ENCODE measurements at regions of chr6 and their contacts with region 1.

Region 1: GRCh38 chr6:134097114-134097707 is 44.8 kb upstream of the SLC2A12 start:
- DNase-seq: peak; percentile 67
- H3K4me3 Mint-ChIP-seq: no peak overlapping the region
- H3K27ac Mint-ChIP-seq: no peak overlapping the region
- H3K4me1 Mint-ChIP-seq: no peaks in the 10 kb centered on the region
- H3K27me3 Mint-ChIP-seq: peaks cover 11% of the 10 kb centered on the region

Region 2: DNA sequence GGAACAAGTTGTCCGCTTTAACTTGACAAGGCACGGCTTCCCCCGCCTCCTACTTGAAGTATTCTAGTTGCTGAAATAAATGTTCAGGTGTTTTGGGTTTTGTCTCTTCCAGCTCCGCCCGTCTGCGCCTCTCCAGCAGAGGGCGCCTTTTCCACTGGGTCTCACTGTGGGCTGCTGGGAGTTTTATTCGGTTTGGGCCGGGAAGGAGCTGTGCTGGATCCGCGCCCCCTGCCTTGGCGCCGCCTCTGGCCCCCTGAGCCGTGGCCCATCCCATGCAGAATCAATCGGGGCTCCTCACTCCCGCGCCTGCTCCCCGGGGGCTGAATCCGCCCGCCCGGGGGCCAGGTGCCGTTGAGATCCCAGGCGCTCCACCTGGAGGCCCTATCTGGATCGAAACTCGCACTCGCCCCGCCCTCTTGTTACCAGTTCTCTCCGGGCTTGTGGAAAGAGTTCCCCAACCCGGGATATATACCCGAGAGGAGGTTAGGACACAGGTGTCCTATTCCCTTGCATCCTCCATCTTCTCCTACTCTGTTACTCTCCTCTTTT is 259.3 kb before region 1 on chr6:
- CTCF ChIA-PET with region 1: interaction called, 22 read pairs
- POLR2A ChIA-PET with region 1: no interaction called
- intact Hi-C with region 1: loop called (anchors 2 kb)
- DNase-seq: peak; percentile 71
- H3K4me3 Mint-ChIP-seq: peak overlapping the region; percentile 60
- H3K27ac Mint-ChIP-seq: no peak overlapping the region
- H3K4me1 Mint-ChIP-seq: peaks cover 3% of the 10 kb centered on the region
- H3K27me3 Mint-ChIP-seq: peaks cover 15% of the 10 kb centered on the region

Region 3: GRCh38 chr6:133916650-133917151 is 180.5 kb before region 1 on chr6:
- CTCF ChIA-PET with region 1: interaction called, 362 read pairs
- POLR2A ChIA-PET with region 1: no interaction called
- intact Hi-C with region 1: no loop called
- DNase-seq: peak; percentile 84
- H3K4me3 Mint-ChIP-seq: no peak overlapping the region
- H3K27ac Mint-ChIP-seq: no peak overlapping the region
- H3K4me1 Mint-ChIP-seq: peaks cover 4% of the 10 kb centered on the region
- H3K27me3 Mint-ChIP-seq: peaks cover 7% of the 10 kb centered on the region

Region 4: DNA sequence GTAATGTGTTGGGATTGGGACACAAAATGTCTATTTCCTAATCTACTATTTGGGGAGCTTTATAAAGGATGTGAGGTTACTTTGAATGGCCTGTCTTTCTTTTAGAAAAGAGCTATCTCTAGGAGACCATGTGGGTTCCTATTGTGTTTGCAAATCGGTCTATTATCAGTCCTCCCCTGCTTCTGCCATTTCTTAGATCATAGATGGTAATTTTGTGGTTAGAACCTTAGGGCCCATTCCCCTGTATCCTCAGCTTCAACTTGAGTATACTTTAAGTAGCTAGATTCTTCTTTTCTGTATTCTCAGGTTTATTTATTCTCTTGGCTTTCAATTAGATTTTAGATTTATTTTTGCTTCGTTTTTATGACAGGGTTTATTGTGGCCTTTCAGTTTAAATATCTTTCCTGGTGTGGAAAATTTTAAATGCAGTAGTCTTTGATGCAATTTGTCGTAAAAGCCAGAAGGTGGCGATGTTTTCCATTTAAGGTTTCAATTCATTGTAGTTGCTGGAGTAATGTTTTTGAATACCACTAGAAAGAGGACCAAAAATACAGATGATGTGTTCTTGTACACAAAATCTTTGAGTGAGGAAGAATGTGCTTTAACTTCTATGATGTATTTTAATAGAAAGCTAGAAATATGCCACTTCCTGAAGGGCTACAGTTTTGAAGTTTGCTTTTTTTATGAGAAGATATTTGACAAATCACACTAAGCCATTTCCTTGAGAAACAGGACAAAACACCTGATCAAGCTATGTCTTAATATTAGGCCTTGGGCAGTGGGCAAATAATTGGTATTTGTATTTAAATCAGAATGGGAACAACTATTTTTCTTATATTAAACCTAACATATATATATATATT is 123.9 kb before region 1 on chr6:
- CTCF ChIA-PET with region 1: interaction called, 42 read pairs
- POLR2A ChIA-PET with region 1: no interaction called
- intact Hi-C with region 1: loop called (anchors 1 kb)
- DNase-seq: no peak
- H3K4me3 Mint-ChIP-seq: no peak overlapping the region
- H3K27ac Mint-ChIP-seq: no peak overlapping the region
- H3K4me1 Mint-ChIP-seq: peaks cover 30% of the 10 kb centered on the region
- H3K27me3 Mint-ChIP-seq: no peaks in the 10 kb centered on the region

Region 5: DNA sequence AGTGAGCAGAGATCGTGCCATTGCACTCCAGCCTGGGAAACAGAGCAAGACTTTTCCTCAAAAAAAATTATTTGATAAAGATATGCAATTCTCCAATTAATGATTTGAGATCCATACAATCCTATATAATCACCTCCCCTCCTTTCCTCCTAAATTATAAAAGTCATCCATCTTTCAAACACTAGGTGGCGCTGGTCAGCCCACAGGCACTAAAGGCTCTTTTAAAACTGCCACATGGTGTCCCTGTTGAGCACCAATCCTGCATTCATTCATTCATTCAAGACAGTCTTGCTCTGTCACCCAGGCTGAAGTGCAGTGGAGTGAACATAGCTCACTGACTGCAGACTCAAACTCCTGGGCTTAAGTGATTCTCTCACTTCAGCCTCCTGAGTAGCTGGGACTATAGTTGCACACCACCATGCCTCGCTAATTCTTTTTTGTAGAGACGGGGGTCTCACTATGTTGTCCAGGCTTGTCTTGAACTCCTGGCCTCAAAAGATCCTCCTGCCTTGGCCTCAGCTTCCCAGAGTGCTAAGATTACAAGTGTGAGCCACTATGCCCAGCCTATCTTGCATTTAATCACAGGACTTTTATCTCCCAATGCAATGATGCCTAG is 14.0 kb after region 1 on chr6:
- CTCF ChIA-PET with region 1: interaction called, 12 read pairs
- POLR2A ChIA-PET with region 1: no interaction called
- intact Hi-C with region 1: no loop called
- DNase-seq: peak; percentile 50
- H3K4me3 Mint-ChIP-seq: no peak overlapping the region
- H3K27ac Mint-ChIP-seq: no peak overlapping the region
- H3K4me1 Mint-ChIP-seq: no peaks in the 10 kb centered on the region
- H3K27me3 Mint-ChIP-seq: peaks cover 8% of the 10 kb centered on the region

Measured in activated CD4-positive, alpha-beta memory T cell treated with anti-CD3 and anti-CD28 coated beads for 36 hours (primary cell).